SK-N-SH (cell line): ENCODE measurements at regions of chr10 and their contacts with region 1.

Region 1: DNA sequence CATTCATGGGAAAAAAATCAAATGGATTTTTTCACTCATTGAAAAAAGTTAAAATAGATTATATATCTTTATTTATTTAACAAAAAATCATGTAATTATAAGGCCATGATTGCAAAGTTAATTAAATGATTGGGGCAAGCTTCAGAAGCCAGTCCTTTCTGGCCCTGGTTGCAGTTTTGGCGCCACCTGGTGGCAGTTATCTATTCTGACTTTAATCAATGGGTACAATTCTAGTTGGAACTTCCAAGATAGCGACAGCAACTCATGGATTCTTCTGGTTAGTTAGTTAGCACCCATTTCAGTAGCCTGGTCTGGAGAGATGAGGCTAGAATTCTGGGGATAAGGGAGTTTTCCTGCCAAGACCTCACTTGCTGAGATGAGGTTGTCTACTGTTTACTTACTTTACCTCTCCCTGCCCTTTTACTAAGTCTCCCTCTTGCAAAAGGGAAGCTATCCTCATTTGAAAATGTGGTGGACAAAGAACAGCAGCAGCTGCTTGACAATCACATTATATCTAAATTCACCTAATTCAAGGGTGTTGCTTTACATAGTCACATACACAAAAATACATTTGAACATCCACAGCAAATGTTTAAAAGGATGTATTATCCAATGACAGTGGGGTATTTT is 42.3 kb downstream of the NOC3L start:
- DNase-seq: peak; percentile 43
- H3K4me3 ChIP-seq: no peak overlapping the region; a peak in 1 of 4 replicates
- H3K27ac ChIP-seq: no peak overlapping the region; a peak in 1 of 4 replicates
- H3K4me1 ChIP-seq: no peaks in the 10 kb centered on the region
- H3K27me3 ChIP-seq: no peaks in the 10 kb centered on the region
- CTCF ChIP-seq: peak; percentile 87
- EP300 ChIP-seq: no peak
- RAD21 ChIP-seq: peak; percentile 89

Region 2: GRCh38 chr10:93907059-93907458 is 413.3 kb before region 1 on chr10:
- CTCF ChIA-PET with region 1: interaction called, 23 read pairs
- POLR2A ChIA-PET with region 1: no interaction called
- DNase-seq: no peak
- H3K4me3 ChIP-seq: no peak overlapping the region
- H3K27ac ChIP-seq: no peak overlapping the region
- H3K4me1 ChIP-seq: no peaks in the 10 kb centered on the region
- H3K27me3 ChIP-seq: no peaks in the 10 kb centered on the region
- CTCF ChIP-seq: no peak
- EP300 ChIP-seq: no peak
- RAD21 ChIP-seq: no peak

Region 3: GRCh38 chr10:94076321-94076841 is 244.0 kb before region 1 on chr10:
- CTCF ChIA-PET with region 1: interaction called, 25 read pairs
- POLR2A ChIA-PET with region 1: no interaction called
- DNase-seq: peak; percentile 19
- H3K4me3 ChIP-seq: no peak overlapping the region
- H3K27ac ChIP-seq: peak overlapping the region; percentile 17 to 18; a peak in 1 of 4 replicates
- H3K4me1 ChIP-seq: peaks cover 0 to 6% of the 10 kb centered on the region in 2 experiments; a peak in 2 of 4 replicates
- H3K27me3 ChIP-seq: no peaks in the 10 kb centered on the region
- CTCF ChIP-seq: peak; percentile 68
- EP300 ChIP-seq: no peak
- RAD21 ChIP-seq: peak; percentile 74

Region 4: DNA sequence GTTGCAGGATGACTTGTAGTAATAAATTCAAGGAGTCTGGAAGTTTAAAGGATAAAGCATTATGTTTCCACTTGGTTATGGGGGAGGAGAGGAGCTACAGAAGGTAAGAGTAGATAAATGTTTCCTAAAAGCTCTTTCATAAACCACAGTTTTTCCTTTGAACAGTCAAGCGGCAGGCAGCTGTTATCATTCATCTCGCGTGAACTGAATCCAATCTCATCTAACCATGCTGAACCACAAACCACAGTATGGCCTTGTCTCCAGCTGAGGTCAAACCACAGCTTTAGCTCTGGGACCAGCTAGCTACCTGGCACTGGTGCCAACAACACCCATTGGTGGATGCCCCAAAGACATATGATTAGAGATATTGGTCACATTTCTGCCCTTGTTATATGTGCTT is 21.0 kb before region 1 on chr10:
- CTCF ChIA-PET with region 1: interaction called, 59 read pairs
- POLR2A ChIA-PET with region 1: no interaction called
- DNase-seq: no peak
- H3K4me3 ChIP-seq: no peak overlapping the region
- H3K27ac ChIP-seq: no peak overlapping the region; a peak in 1 of 4 replicates
- H3K4me1 ChIP-seq: no peaks in the 10 kb centered on the region; a peak in 1 of 4 replicates
- H3K27me3 ChIP-seq: no peaks in the 10 kb centered on the region
- CTCF ChIP-seq: no peak
- EP300 ChIP-seq: peak in 1 of 2 experiments; percentile 54; a peak in 1 of 4 replicates
- RAD21 ChIP-seq: no peak

Region 5: GRCh38 chr10:94334857-94335256 is 14.5 kb after region 1 on chr10:
- CTCF ChIA-PET with region 1: interaction called, 46 read pairs
- POLR2A ChIA-PET with region 1: no interaction called
- DNase-seq: no peak
- H3K4me3 ChIP-seq: no peak overlapping the region
- H3K27ac ChIP-seq: no peak overlapping the region
- H3K4me1 ChIP-seq: no peaks in the 10 kb centered on the region
- H3K27me3 ChIP-seq: no peaks in the 10 kb centered on the region
- CTCF ChIP-seq: no peak
- EP300 ChIP-seq: no peak
- RAD21 ChIP-seq: no peak

Region 6: GRCh38 chr10:94439275-94439861 is 119.0 kb after region 1 on chr10:
- CTCF ChIA-PET with region 1: interaction called, 63 read pairs
- POLR2A ChIA-PET with region 1: no interaction called
- DNase-seq: no peak
- H3K4me3 ChIP-seq: no peak overlapping the region
- H3K27ac ChIP-seq: no peak overlapping the region
- H3K4me1 ChIP-seq: peaks cover 3 to 10% of the 10 kb centered on the region in 2 experiments; a peak in 2 of 4 replicates
- H3K27me3 ChIP-seq: no peaks in the 10 kb centered on the region
- CTCF ChIP-seq: peak; percentile 25; the same call in 1 of the 2 replicates
- EP300 ChIP-seq: no peak
- RAD21 ChIP-seq: peak; percentile 46